Activated CD8-positive, alpha-beta T cell treated with anti-CD3 and anti-CD28 coated beads, Interleukin-2, amount 10 ng/mL, durations not matched to agents 7 days and 5 days (primary cell): ENCODE measurements at regions of chr10 and their contacts with region 1.

Region 1: GRCh38 chr10:73886085-73886529 is 11.8 kb upstream of the CAMK2G start:
- DNase-seq: peak; percentile 81
- ATAC-seq: peak; percentile 93
- H3K4me3 Mint-ChIP-seq: no peak overlapping the region
- H3K27ac Mint-ChIP-seq: no peak overlapping the region
- H3K4me1 Mint-ChIP-seq: peaks cover 7% of the 10 kb centered on the region
- H3K27me3 Mint-ChIP-seq: peaks cover 4% of the 10 kb centered on the region

Region 2: DNA sequence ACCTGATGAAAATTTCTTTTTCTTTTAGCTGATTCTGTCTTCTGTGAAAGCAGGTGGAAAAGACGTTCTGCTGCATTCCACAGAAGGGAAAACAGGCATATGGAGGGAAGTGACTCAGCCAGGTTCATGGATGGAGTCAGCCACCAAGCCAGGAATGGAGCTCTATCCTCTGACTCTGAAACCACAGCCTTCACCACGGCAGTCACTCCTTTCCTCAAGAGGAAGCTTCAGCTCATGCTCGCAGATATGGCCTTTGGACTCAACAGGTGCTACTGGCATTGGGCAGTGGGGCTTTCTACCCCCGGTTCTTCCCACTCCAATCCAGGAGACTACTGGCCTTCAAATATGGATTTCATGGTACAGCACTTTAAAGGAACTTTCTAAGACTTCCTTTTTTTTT is 13.3 kb after region 1 on chr10:
- CTCF ChIA-PET with region 1: interaction called, 27 read pairs
- POLR2A ChIA-PET with region 1: interaction called, 4 read pairs
- DNase-seq: no peak
- ATAC-seq: no peak
- H3K4me3 Mint-ChIP-seq: no peak overlapping the region
- H3K27ac Mint-ChIP-seq: no peak overlapping the region
- H3K4me1 Mint-ChIP-seq: peaks cover 14% of the 10 kb centered on the region
- H3K27me3 Mint-ChIP-seq: peaks cover 18% of the 10 kb centered on the region

Region 3: DNA sequence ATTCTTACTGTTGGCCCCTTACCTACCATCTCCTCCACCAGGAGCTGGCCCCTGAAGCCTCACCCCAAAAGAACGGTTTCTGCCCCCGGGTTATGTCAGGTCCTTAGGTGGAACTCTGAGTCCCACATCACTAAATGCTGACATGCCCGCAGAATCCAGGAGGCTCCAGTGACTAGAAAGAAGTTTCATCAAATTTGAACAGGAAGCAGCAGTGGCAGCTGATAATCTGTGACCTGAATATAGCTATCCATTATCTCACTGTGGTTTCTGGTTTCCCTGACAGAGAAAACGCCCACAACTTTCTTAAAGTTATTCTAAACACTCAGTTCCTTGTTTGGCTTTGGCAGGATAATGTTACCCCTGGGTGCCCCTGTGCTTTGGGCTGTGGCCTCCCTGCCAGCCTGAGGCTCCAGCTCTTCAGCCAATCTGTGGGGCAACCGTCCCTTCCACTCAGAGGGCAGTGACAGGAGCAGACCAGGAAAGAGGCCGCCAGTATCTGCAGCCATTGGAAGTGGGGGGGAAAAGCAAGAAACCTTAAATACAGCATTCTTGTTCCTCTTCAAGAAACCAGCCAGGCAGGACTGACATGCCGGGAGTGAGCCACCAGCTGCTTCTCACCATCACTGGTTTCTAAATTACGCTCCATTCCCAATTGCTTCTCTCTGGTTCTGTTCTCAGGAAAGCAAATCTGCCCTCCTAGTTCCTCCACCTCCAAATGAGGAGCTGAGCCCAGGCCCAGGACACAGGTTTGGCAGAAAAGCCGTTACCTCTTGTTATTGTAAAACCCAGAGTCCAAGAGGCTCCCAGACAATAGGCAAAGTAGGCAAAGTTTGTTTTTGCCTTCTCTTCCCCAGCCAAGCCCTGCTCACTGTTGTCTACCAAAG is 70.6 kb after region 1 on chr10:
- CTCF ChIA-PET with region 1: interaction called, 36 read pairs
- POLR2A ChIA-PET with region 1: no interaction called
- DNase-seq: peak; percentile 62
- ATAC-seq: peak; percentile 76
- H3K4me3 Mint-ChIP-seq: peak overlapping the region; percentile 60
- H3K27ac Mint-ChIP-seq: peak overlapping the region; percentile 89
- H3K4me1 Mint-ChIP-seq: peaks cover 53% of the 10 kb centered on the region
- H3K27me3 Mint-ChIP-seq: peaks cover 2% of the 10 kb centered on the region

Region 4: DNA sequence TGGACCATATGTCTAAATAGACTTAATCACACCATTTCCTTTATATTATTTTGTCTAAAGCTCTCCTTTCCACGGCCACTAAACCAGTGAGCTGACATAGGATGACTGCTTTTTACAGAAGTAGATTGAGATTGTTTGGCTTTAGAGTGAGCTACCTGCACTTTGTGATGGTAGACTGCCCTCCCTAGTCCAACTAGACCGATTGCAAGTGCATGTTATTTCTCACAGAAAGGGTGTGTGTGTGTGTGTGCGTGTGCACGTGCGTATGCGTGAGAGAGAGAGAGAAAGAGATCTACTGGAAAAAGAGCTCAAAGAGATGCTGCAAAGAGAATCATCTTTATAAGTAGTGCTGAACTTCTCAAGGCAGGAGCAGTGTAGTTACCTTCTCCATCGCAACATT is 172.6 kb after region 1 on chr10:
- CTCF ChIA-PET with region 1: interaction called, 26 read pairs
- POLR2A ChIA-PET with region 1: no interaction called
- DNase-seq: peak; percentile 42
- ATAC-seq: peak; percentile 43
- H3K4me3 Mint-ChIP-seq: no peak overlapping the region
- H3K27ac Mint-ChIP-seq: peak overlapping the region; percentile 51
- H3K4me1 Mint-ChIP-seq: peaks cover 42% of the 10 kb centered on the region
- H3K27me3 Mint-ChIP-seq: no peaks in the 10 kb centered on the region

Region 5: GRCh38 chr10:74103560-74104248 is 217.6 kb after region 1 on chr10:
- CTCF ChIA-PET with region 1: interaction called, 48 read pairs
- POLR2A ChIA-PET with region 1: no interaction called
- DNase-seq: no peak
- ATAC-seq: no peak
- H3K4me3 Mint-ChIP-seq: no peak overlapping the region
- H3K27ac Mint-ChIP-seq: no peak overlapping the region
- H3K4me1 Mint-ChIP-seq: peaks cover 4% of the 10 kb centered on the region
- H3K27me3 Mint-ChIP-seq: no peaks in the 10 kb centered on the region